Heart right ventricle (tissue), 16 donors: ENCODE measurements at regions of chr7 and their contacts with region 1.

Region 1: GRCh38 chr7:157250605-157251228 is 86.1 kb upstream of the DNAJB6 start:
- DNase-seq: peak in 1 of 2 donors; percentile 29
- ATAC-seq: peak in 4 of 8 donors; percentile 52 to 77 (median 58)
- H3K4me3 ChIP-seq: no peak overlapping the region
- H3K27ac ChIP-seq: no peak overlapping the region
- H3K4me1 ChIP-seq: no peaks in the 10 kb centered on the region
- H3K27me3 ChIP-seq: no peaks in the 10 kb centered on the region
- CTCF ChIP-seq: peak; percentile 58 to 84 (median 78)

Region 2: DNA sequence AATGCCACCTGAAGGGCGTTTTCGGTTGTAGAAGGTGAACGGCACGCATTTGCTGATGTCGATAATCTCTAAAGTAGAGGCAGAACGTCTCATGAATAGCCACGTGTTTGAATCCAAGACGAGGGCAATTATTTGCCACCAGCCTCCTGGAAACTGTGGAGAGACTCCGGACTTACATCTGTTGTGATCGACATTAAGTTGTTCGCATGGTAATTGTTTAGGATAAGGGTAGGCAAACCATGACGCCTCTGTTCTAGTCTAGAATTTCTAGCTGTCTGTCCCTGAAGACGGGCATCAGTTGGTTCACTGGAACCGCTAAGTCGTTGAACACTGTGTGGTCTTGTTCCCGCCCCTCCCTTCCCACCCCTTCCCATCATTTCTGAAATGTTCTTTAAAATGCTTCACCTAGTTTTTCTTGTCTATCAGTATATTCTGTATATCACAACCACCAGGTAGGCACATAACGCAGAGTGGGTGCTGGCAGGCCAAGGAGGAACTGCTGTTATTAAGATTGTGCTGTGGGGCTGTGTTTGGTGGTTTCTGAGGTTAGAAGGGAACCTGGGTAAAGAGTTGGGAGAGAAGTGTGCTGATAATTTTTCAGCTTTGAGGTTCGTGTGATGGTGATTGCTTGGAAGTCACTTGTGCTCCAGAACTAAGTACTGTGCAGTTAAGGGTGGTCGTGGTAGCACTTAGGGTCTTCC is 110.8 kb before region 1 on chr7:
- intact Hi-C with region 1: no loop called
- DNase-seq: no peak
- ATAC-seq: no peak
- H3K4me3 ChIP-seq: peak overlapping the region; percentile 64 to 89 (median 82)
- H3K27ac ChIP-seq: peak overlapping the region in 9 of 10 donors; percentile 79 to 96 (median 86)
- H3K4me1 ChIP-seq: peaks cover 4 to 53% (median 29%) of the 10 kb centered on the region in 9 donors
- H3K27me3 ChIP-seq: no peaks in the 10 kb centered on the region
- CTCF ChIP-seq: no peak

Region 3: DNA sequence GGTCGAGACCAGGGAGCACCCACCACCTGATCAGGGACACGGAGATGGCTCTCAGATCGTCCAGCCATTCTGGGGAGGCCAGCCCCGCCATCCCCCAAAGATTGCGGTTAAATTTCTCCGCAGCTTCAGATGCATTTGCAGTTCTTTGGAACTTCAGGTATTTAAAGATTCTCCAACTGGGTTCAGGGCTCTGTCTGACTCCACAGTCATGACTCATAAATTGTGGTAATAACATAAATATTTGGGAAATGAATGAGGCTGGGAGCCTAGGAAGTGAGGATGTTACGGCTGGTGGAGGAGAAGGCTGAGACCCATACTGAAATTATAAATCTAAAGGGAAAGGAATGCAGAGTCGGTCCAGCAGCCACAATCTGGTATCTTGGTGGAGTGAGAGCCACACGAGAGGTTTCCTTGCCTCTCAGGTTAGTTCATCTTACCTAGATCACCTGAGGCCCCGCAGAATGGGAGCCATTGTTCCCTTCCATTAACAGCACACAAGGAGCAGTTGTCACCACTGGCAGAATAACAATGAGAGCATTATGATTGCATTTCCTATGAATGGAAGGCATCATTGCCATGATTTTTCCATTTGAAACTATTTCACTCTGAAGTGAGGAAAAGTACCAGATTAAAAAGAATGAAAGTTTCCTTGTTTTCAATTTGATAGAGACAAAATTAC is 59.4 kb after region 1 on chr7:
- intact Hi-C with region 1: no loop called
- DNase-seq: no peak
- ATAC-seq: no peak
- H3K4me3 ChIP-seq: no peak overlapping the region
- H3K27ac ChIP-seq: no peak overlapping the region
- H3K4me1 ChIP-seq: no peaks in the 10 kb centered on the region
- H3K27me3 ChIP-seq: peaks cover 0 to 5% (median 0%) of the 10 kb centered on the region in 7 donors
- CTCF ChIP-seq: no peak

Region 4: DNA sequence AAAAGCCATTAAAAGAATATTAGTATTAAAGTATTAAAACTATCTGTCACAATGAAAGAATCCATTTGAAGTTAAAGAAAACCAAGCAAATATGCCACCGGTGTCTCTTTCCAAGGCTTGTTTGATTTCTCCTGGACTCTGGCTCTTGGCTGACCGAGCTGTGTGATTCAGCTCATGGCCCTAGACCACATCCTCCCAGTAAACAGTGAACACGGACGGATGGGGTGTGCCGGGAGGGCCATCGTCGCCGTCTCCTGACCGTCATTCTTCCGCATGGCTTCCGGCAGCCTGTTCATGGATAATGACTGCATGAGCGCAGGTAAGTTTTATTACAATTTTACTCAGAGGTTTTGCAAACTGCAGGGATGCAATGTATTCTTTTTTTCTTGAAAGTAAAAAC is 304.6 kb after region 1 on chr7:
- intact Hi-C with region 1: loop called in 1 of 10 experiments (anchors 10 kb)
- DNase-seq: no peak
- ATAC-seq: peak in 1 of 8 donors; percentile 29
- H3K4me3 ChIP-seq: no peak overlapping the region
- H3K27ac ChIP-seq: no peak overlapping the region
- H3K4me1 ChIP-seq: no peaks in the 10 kb centered on the region
- H3K27me3 ChIP-seq: peaks cover 0 to 3% (median 0%) of the 10 kb centered on the region in 7 donors
- CTCF ChIP-seq: no peak